PC-9 (cell line): ENCODE measurements at regions of chr12 and their contacts with region 1.

Region 1: DNA sequence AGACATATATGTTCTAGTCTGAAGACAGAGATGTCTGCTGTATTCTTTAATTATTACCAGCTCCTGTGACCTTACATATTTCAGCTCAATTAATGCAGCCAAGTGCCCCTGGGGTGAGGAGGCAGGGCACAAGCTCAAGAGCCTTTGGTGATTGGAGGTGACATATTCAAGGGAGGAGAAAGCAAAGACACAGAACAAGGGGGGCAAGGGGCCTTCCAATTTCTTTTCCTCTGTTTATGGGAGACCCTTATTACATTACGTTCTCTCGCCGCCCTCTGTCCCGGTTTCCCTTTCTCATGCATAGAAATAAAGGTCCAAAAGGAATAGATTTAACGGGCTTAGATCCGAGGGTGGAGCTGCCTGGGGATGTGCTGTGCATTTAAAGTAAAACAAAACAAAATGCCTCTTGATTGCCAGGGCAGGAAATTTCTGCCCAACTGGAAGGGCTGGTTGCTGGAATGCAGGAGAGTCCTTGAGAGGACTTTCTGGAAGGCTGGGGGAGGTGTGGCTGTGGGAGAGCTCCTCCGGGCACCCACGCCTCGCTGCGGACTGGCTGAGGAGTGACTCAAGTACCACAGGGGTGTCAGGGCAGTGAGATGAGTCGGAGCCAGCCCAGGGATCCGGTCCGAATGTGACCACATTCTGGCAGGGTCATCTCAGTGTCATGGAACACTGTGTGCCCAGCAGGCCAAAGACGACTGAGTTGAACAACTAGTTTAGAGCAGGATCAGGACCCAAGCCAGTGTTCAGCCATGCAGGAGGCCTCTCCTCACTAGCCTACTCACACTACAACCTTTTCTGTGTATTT is 32.1 kb upstream of the GSG1 start:
- DNase-seq: peak; percentile 99
- H3K4me3 ChIP-seq: peak overlapping the region; percentile 39; the same call in 1 of the 2 replicates
- H3K27ac ChIP-seq: peak overlapping the region; percentile 88
- H3K4me1 ChIP-seq: peaks cover 50% of the 10 kb centered on the region
- H3K27me3 ChIP-seq: no peaks in the 10 kb centered on the region
- CTCF ChIP-seq: peak; percentile 32; the same call in 1 of the 2 replicates

Region 2: GRCh38 chr12:12403264-12404248 is 732.0 kb before region 1 on chr12:
- CTCF ChIA-PET with region 1: no interaction called
- POLR2A ChIA-PET with region 1: no interaction called
- intact Hi-C with region 1: no loop called
- DNase-seq: no peak
- H3K4me3 ChIP-seq: no peak overlapping the region
- H3K27ac ChIP-seq: no peak overlapping the region
- H3K4me1 ChIP-seq: peaks cover 7% of the 10 kb centered on the region
- H3K27me3 ChIP-seq: no peaks in the 10 kb centered on the region
- CTCF ChIP-seq: no peak

Region 3: DNA sequence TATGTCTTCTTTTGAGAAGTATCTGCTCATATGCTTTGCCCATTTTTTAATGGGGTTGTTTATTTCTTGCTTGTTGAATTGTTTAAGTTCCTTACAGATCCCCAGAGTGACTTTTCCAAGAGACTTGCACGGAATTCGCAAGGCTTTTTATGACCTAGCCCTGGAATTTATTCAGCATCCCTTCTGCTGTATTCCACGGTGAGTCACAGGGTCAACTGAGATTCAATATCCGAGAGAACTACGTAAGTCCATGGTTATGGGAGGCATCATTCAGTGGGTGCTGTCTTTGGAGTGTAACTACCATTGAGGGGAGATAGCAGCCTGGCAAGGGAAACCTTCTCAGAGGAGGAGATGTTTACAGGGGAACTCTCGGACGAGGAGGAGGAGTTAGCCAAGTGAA is 265.1 kb before region 1 on chr12:
- CTCF ChIA-PET with region 1: no interaction called
- POLR2A ChIA-PET with region 1: no interaction called
- intact Hi-C with region 1: no loop called
- DNase-seq: peak in 1 of 2 experiments; percentile 83
- H3K4me3 ChIP-seq: no peak overlapping the region
- H3K27ac ChIP-seq: peak overlapping the region; percentile 97
- H3K4me1 ChIP-seq: peaks cover 53% of the 10 kb centered on the region
- H3K27me3 ChIP-seq: no peaks in the 10 kb centered on the region
- CTCF ChIP-seq: no peak

Region 4: DNA sequence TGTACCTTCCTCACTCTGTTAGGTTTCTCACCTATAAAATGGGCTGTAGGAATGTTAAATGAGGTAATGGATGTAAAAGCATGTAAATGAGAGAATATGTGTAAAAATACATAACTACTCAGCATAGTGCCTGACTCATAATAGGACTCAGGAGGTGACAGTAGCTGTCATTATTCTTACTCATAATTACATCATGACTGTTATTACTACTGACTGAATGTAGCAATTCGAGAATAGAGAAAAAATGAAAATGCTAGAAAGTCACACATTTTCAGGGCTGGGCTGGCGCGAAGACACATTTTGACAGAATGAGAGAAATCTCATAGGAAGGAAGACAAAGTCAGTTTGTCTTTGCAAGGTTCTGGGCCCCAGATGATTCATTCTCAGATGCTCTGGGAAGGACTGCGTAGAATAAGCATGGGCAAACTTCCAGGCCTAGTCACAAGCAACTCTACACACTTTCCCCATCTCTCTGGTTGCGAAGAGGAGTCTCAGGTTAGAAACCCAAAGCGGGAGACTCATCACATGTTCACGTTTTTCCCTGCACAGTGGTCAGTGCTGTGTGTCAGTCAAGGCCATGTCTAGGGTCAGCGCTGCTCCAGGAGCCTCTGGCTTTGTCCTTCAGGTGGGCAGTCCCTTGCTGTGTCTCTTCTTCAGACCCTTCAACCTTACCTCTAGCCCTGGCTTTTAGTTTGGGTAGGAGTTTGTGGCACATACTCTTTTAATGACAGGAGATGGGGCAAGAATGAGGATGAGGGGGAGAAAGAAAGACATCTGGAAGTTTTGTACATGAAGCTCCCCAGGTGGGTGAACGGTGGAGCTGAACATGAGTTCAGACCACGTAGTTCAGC is 235.8 kb before region 1 on chr12:
- CTCF ChIA-PET with region 1: interaction called, 10 read pairs
- POLR2A ChIA-PET with region 1: no interaction called
- intact Hi-C with region 1: no loop called
- DNase-seq: peak in 1 of 2 experiments; percentile 65
- H3K4me3 ChIP-seq: peak overlapping the region; percentile 17; the same call in 1 of the 2 replicates
- H3K27ac ChIP-seq: peak overlapping the region; percentile 76
- H3K4me1 ChIP-seq: peaks cover 89% of the 10 kb centered on the region
- H3K27me3 ChIP-seq: no peaks in the 10 kb centered on the region
- CTCF ChIP-seq: no peak

Region 5: GRCh38 chr12:13038491-13039161 is 96.9 kb before region 1 on chr12:
- CTCF ChIA-PET with region 1: no interaction called
- POLR2A ChIA-PET with region 1: no interaction called
- intact Hi-C with region 1: no loop called
- DNase-seq: no peak
- H3K4me3 ChIP-seq: no peak overlapping the region
- H3K27ac ChIP-seq: no peak overlapping the region
- H3K4me1 ChIP-seq: 0 out of 2 replicates have a peak, but pooled peaks cover 7% of the 10 kb centered on the region
- H3K27me3 ChIP-seq: no peaks in the 10 kb centered on the region
- CTCF ChIP-seq: no peak

Region 6: DNA sequence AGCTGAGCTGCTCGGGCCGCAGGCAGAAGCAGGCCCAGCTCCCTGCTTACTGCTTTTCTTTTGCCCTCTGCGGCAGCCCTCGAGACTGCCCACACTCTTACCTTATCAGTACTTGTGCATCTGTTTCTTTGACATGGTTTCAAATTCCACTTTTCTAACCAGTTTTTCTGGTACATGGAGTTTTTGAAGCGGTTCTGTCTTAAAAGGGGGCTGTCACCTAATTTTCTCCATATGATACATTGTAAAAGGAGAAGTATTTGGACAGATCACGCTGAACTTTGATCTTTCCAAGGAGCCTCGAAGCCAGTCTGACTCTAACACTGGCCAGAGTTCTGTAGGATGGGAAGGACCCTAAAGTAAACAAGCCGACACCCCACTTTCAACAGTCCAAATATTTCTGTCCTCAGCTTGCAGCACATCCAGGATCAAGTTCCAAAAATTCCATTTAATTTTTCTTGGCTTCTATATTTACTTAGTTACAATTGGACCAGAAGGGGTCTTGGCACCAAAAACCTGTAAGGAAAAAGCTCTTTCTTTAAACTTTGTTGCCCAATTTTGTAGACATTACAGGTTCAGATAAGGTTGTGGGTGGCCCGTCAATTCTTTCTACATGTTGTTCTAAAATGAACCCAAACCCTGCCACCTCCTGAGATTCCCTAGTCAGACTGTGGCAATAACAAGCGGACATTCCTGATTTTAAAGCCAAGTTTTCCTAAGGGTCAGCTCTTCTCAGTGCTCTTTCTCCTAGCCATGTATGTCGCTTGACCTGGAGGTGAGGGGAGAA is 12.7 kb after region 1 on chr12:
- CTCF ChIA-PET with region 1: interaction called, 3 read pairs
- POLR2A ChIA-PET with region 1: interaction called, 11 read pairs
- intact Hi-C with region 1: loop called (anchors 1 kb)
- DNase-seq: peak; percentile 68 to 84
- H3K4me3 ChIP-seq: no peak overlapping the region
- H3K27ac ChIP-seq: peak overlapping the region; percentile 43
- H3K4me1 ChIP-seq: peaks cover 38% of the 10 kb centered on the region
- H3K27me3 ChIP-seq: no peaks in the 10 kb centered on the region
- CTCF ChIP-seq: no peak

Region 7: GRCh38 chr12:13173012-13173932 is 37.7 kb after region 1 on chr12:
- CTCF ChIA-PET with region 1: interaction called, 6 read pairs
- POLR2A ChIA-PET with region 1: interaction called, 8 read pairs
- intact Hi-C with region 1: loop called (anchors 1 kb)
- DNase-seq: peak; percentile 93 to 97
- H3K4me3 ChIP-seq: peak overlapping the region; percentile 37; the same call in 1 of the 2 replicates
- H3K27ac ChIP-seq: peak overlapping the region; percentile 99
- H3K4me1 ChIP-seq: peaks cover 100% of the 10 kb centered on the region
- H3K27me3 ChIP-seq: no peaks in the 10 kb centered on the region
- CTCF ChIP-seq: no peak

Region 8: GRCh38 chr12:13187399-13187798 is 51.8 kb after region 1 on chr12:
- CTCF ChIA-PET with region 1: no interaction called
- POLR2A ChIA-PET with region 1: interaction called, 19 read pairs
- intact Hi-C with region 1: no loop called
- DNase-seq: peak; percentile 60 to 90
- H3K4me3 ChIP-seq: no peak overlapping the region
- H3K27ac ChIP-seq: peak overlapping the region; percentile 54
- H3K4me1 ChIP-seq: peaks cover 40% of the 10 kb centered on the region
- H3K27me3 ChIP-seq: no peaks in the 10 kb centered on the region
- CTCF ChIP-seq: no peak

Region 9: GRCh38 chr12:13443498-13443897 is 307.9 kb after region 1 on chr12:
- CTCF ChIA-PET with region 1: no interaction called
- POLR2A ChIA-PET with region 1: no interaction called
- intact Hi-C with region 1: no loop called
- DNase-seq: no peak
- H3K4me3 ChIP-seq: no peak overlapping the region
- H3K27ac ChIP-seq: no peak overlapping the region
- H3K4me1 ChIP-seq: peaks cover 3% of the 10 kb centered on the region; the same call in 1 of the 2 replicates
- H3K27me3 ChIP-seq: no peaks in the 10 kb centered on the region
- CTCF ChIP-seq: no peak